Cardiac septum (tissue), 1 donor: ENCODE measurements at regions of chr17 and their contacts with region 1.

Region 1: DNA sequence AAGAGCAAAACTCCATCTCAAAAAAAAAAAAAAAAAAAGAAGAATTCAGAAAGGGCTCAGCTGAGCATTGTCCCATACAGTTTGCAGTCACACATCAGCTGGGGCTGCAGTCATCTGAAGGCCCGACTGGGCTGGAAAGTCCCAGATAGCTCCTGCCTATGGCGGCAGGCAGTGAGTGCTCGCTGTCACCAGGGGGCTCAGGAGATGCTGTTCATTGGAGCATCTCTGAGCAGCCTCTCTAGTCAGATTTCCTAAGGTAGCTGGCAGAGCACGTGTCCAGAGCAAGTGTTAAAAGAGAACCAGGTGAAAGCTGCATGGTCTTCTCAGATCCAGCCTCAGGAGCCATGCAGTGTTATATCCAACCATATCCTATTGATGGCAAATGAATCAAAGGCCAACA is 75.8 kb downstream of the WSCD1 start:
- DNase-seq: no peak

Region 2: GRCh38 chr17:6084311-6085161 is 61.4 kb before region 1 on chr17:
- intact Hi-C with region 1: loop called (anchors 10 kb)
- DNase-seq: no peak